Activated CD4-positive, alpha-beta T cell treated with anti-CD3 and anti-CD28 coated beads, Interleukin-2, amount 10 ng/mL, durations not matched to agents 7 days and 5 days (primary cell): ENCODE measurements at regions of chr3 and their contacts with region 1.

Region 1: GRCh38 chr3:5187156-5187919 is at the start of gene EDEM1:
- DNase-seq: peak; percentile 92
- H3K4me3 Mint-ChIP-seq: peak within 1 kb of the TSS; percentile 93
- H3K27ac Mint-ChIP-seq: peak within 1 kb of the TSS; percentile 97
- H3K4me1 Mint-ChIP-seq: peaks cover 35% of the 10 kb centered on the region
- H3K27me3 Mint-ChIP-seq: no peaks in the 10 kb centered on the region
- total RNA-seq, gene EDEM1: 80.1 to 94.1 TPM

Region 2: GRCh38 chr3:5197470-5198312 is 10.4 kb after region 1 on chr3:
- CTCF ChIA-PET with region 1: interaction called, 6 read pairs
- POLR2A ChIA-PET with region 1: interaction called, 11 read pairs
- DNase-seq: peak; percentile 68
- H3K4me3 Mint-ChIP-seq: peak overlapping the region; percentile 69
- H3K27ac Mint-ChIP-seq: peak overlapping the region; percentile 98
- H3K4me1 Mint-ChIP-seq: peaks cover 77% of the 10 kb centered on the region
- H3K27me3 Mint-ChIP-seq: no peaks in the 10 kb centered on the region

Region 3: DNA sequence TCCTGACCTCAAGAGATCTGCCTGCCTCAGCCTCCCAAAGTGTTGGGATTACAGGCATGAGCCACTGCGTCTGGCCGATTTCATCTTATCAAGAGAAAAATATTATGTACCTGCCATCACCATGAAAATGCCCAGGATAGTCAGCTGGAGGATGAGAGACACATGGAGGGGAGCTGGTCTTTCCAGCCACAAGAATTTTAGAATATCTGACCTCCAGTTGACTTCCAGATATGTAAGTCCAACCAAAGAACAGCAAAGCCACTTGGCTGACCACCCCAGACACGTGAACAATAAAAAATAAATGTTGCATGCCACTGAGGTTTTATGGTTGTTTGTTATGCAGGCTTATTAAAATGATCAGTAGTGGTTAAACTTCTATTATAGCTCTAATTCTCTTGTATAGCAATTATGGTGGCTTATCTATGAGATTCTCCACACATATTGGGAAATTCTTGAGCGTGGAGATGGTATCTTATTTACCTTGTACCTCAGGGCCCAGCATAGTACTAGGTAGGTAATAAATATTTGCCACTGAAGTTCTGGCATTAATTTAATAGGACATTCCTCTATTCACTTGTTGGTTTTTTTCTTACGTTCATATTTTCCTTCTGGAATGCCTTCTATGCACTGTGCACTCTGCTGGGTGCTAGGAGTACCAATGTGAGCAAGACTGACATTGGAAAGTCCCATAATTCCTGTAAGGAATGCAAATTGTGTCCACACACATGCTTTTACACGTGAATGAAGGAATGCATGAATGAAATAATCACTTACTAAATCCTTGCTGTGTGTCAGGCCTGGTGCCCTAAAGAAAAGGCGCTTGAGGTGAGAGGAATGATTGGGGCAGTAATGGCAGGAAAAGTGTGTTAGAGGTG is 77.8 kb after region 1 on chr3:
- CTCF ChIA-PET with region 1: no interaction called
- POLR2A ChIA-PET with region 1: no interaction called
- DNase-seq: no peak
- H3K4me3 Mint-ChIP-seq: no peak overlapping the region
- H3K27ac Mint-ChIP-seq: no peak overlapping the region
- H3K4me1 Mint-ChIP-seq: peaks cover 6% of the 10 kb centered on the region
- H3K27me3 Mint-ChIP-seq: peaks cover 4% of the 10 kb centered on the region